Activated CD4-positive, alpha-beta memory T cell treated with anti-CD3 and anti-CD28 coated beads for 36 hours (primary cell): ENCODE measurements at regions of chr6 and their contacts with region 1.

Region 1: GRCh38 chr6:8063761-8064637 is at the start of gene BLOC1S5:
- DNase-seq: peak; percentile 98
- H3K4me3 Mint-ChIP-seq: peak within 1 kb of the TSS; percentile 94
- H3K27ac Mint-ChIP-seq: peak within 1 kb of the TSS; percentile 96
- H3K4me1 Mint-ChIP-seq: peaks cover 24% of the 10 kb centered on the region
- H3K27me3 Mint-ChIP-seq: no peaks in the 10 kb centered on the region
- total RNA-seq, gene BLOC1S5: 18.3 to 23.8 TPM

Region 2: DNA sequence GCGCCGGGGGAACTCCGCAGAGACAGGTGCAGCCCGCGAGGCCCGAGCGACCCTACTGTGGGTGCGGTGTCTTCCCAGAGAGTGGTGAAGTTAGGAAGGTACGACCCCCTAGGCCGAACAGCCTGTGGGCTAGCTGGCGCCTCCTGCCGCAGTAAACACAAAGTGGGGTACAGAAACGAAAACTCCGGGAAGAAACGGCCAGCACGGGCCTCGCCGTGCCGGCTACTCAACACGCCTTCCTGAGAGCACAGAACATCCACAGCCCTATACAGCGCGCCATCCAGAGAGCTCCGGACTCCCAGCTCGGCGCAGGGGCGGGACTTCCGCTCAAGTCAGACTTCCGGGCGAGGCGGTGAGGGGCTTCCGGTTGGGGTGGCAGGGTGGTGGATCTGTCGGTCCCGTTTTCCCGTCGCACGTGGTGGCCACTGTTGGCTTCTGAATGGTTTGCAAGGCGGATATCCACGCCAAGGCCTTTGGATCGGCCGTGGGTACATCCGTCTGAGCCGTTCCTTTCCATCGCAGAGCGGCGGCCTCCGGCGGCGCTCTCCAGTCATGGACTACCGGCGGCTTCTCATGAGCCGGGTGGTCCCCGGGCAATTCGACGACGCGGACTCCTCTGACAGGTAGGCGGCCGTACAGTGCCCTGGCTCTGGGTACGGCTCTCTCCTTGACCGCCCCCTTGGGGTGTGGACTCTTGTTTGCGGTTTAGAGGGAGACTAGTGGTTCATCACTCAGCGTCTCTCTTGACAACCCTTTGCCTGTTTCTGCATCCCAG is 674.4 kb before region 1 on chr6 and contains the starts of genes CAGE1 and RIOK1:
- CTCF ChIA-PET with region 1: no interaction called
- POLR2A ChIA-PET with region 1: no interaction called
- intact Hi-C with region 1: loop called (anchors 1 kb)
- DNase-seq: peak; percentile 98
- H3K4me3 Mint-ChIP-seq: peak within 1 kb of the TSS; percentile 89
- H3K27ac Mint-ChIP-seq: peak within 1 kb of the TSS; percentile 97
- H3K4me1 Mint-ChIP-seq: peaks cover 36% of the 10 kb centered on the region
- H3K27me3 Mint-ChIP-seq: no peaks in the 10 kb centered on the region
- total RNA-seq, gene CAGE1: 0.12 to 0.22 TPM
- total RNA-seq, gene RIOK1: 33.5 to 38.7 TPM

Region 3: DNA sequence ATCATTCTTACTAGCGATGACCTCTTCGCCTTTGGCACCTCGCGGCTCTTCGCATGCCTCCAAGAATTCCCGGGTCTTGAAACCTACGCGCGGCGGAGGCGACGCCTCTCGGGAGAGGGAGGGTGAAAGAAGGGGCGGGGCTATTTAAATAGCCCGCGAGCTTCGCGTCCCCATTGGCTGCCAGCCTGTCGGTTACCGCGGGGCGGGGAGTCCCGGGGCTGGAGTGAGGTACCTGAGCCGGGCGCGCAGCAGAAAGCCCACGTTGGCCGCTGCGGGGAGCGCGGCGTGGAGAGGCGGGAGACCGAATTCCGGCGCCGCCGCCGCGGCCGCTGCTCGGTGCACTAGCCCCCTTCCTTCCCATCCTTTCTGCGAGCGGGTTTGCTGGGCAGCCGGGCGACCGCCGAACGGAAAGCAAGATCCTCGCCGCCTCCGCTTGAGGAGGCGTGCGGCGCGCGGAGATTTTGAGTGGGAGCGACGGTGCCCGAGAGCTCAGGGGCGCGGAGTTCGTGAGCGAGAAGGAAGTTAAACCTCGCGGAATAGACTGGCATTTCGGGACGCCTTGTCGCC is 338.1 kb before region 1 on chr6 and contains the start of gene BMP6:
- CTCF ChIA-PET with region 1: interaction called, 48 read pairs
- POLR2A ChIA-PET with region 1: no interaction called
- intact Hi-C with region 1: loop called (anchors 2 kb)
- DNase-seq: peak; percentile 75
- H3K4me3 Mint-ChIP-seq: peak within 1 kb of the TSS; percentile 66
- H3K27ac Mint-ChIP-seq: no peak within 1 kb of the TSS
- H3K4me1 Mint-ChIP-seq: peaks cover 14% of the 10 kb centered on the region
- H3K27me3 Mint-ChIP-seq: peaks cover 73% of the 10 kb centered on the region
- total RNA-seq, gene BMP6: 0.40 to 0.46 TPM

Region 4: GRCh38 chr6:8086755-8087306 is 22.8 kb after region 1 on chr6:
- CTCF ChIA-PET with region 1: no interaction called
- POLR2A ChIA-PET with region 1: interaction called, 3 read pairs
- intact Hi-C with region 1: loop called (anchors 1 kb)
- DNase-seq: peak; percentile 38
- H3K4me3 Mint-ChIP-seq: no peak overlapping the region
- H3K27ac Mint-ChIP-seq: peak overlapping the region; percentile 49
- H3K4me1 Mint-ChIP-seq: peaks cover 27% of the 10 kb centered on the region
- H3K27me3 Mint-ChIP-seq: no peaks in the 10 kb centered on the region

Region 5: DNA sequence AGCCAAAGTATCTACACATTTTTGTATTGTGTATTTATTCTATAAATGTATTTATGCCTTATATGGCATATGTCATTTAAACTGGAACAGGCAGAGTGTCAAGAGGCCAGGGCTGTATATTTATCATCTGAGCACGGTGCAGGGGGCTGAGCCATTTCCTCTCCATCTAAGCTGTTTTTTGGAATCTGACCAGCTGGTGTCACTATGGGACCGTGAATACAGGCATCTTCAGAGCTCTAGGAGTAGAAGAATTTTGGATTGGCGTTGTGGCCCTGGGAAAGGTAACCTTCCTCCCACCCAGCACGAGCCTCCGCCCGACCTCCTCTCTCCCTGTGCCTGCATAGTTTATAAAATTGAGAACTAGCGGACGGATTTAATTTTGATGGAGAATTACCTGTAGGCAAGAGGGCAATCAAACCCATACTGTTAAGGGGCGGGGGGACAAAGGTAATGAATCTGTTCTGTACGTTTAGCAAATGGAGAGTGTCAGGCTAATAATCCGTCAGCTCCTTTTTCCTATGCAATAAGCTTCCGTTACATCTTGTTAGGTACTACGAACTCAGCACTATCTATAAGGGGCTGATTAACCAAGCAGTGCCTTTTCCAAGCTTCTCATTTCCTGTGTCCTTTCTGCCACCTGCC is 67.4 kb after region 1 on chr6:
- CTCF ChIA-PET with region 1: no interaction called
- POLR2A ChIA-PET with region 1: no interaction called
- intact Hi-C with region 1: no loop called
- DNase-seq: peak; percentile 44
- H3K4me3 Mint-ChIP-seq: no peak overlapping the region
- H3K27ac Mint-ChIP-seq: no peak overlapping the region
- H3K4me1 Mint-ChIP-seq: no peaks in the 10 kb centered on the region
- H3K27me3 Mint-ChIP-seq: peaks cover 21% of the 10 kb centered on the region

Region 6: DNA sequence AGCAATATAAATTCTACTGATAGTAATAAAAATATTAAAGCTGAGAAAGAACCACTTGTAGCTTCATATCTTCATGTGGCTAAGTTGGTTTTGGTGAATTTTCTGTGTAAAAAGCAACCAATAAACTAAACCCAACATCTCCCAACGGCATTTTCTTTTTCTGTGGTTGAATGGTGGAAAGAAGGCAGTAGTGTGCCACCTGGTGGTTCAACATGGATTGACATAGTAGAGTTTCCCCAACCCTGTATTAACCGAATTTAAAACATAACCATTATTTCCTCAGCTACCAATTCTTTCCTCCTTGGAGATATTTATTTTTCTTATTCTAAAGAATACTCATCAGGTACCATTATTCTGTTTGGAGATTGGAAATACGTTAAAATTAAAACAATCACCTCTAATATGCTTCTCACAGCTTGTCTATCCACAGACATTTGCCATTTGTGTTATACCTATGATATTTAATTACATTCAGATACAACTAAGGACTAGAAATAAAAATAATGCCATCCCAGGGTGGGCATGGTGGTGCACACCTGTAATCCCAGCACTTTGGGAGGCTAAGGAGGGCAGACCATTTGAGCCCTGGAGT is 155.4 kb after region 1 on chr6:
- CTCF ChIA-PET with region 1: interaction called, 5 read pairs
- POLR2A ChIA-PET with region 1: no interaction called
- intact Hi-C with region 1: loop called (anchors 2 kb)
- DNase-seq: peak; percentile 40
- H3K4me3 Mint-ChIP-seq: no peak overlapping the region
- H3K27ac Mint-ChIP-seq: no peak overlapping the region
- H3K4me1 Mint-ChIP-seq: no peaks in the 10 kb centered on the region
- H3K27me3 Mint-ChIP-seq: peaks cover 7% of the 10 kb centered on the region